ENCODE measurements at regions of chr20 and their contacts with region 1.

Region 1: GRCh38 chr20:24149881-24150307 is 161.3 kb upstream of the GGTLC1 start:
- H3K4me3 ChIP-seq: no peak overlapping the region
- H3K27ac ChIP-seq: no peak overlapping the region
- H3K4me1 ChIP-seq: no peaks in the 10 kb centered on the region
- CTCF ChIP-seq: no peak

Region 2: GRCh38 chr20:24139846-24140245 is 10.0 kb before region 1 on chr20:
- CTCF ChIA-PET with region 1: no interaction called
- POLR2A ChIA-PET with region 1: no interaction called
- H3K4me3 ChIP-seq: no peak overlapping the region
- H3K27ac ChIP-seq: no peak overlapping the region
- H3K4me1 ChIP-seq: no peaks in the 10 kb centered on the region
- CTCF ChIP-seq: no peak

Region 3: DNA sequence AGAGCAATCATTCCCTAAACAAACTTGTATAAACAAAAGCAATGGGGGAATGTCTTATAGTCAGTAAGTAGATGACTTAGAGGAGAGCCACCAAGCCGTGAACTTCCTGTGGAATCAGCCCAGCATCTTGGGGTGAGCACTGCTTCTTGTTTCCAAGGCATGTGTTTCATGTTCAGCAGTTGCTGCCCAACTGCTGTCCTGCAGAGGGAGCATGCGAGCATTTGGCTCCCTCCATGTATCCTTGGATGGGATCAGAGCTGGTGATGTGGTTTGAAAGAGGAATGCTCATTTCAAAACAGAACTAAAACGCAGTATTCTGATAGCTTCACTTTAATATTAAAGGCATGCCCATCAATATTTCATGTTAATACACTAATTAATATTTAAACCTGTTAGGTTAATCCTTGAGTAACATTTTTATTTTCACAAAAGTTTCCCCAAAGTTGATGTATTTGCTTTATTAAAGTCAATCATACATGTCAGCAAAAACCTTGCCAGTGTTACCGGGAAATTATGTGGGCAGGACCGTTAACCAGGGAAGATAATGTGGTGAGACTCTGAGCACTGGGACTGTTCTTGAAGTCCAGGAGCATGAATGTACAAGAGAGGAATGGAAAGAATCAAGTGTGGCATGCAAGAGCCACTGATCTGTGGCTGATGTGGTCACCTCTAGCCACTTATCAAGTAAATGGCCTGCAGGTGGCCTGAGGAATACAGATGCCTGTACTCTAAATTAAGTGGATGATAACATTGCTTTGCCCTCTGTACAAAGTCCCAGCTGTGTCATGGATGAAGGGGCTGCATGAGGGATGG is 10.9 kb after region 1 on chr20:
- CTCF ChIA-PET with region 1: interaction called, 15 read pairs
- POLR2A ChIA-PET with region 1: no interaction called
- H3K4me3 ChIP-seq: no peak overlapping the region
- H3K27ac ChIP-seq: no peak overlapping the region
- H3K4me1 ChIP-seq: no peaks in the 10 kb centered on the region
- CTCF ChIP-seq: no peak

Measured in HEK293 (cell line).